Activated CD4-positive, alpha-beta T cell treated with anti-CD3 and anti-CD28 coated beads for 36 hours (primary cell): ENCODE measurements at regions of chr6 and their contacts with region 1.

Region 1: GRCh38 chr6:119349323-119350042 is at the start of gene MAN1A1:
- DNase-seq: peak; percentile 93
- ATAC-seq: peak; percentile 87
- H3K4me3 Mint-ChIP-seq: peak within 1 kb of the TSS; percentile 84
- H3K27ac Mint-ChIP-seq: peak within 1 kb of the TSS; percentile 95
- H3K4me1 Mint-ChIP-seq: peaks cover 39% of the 10 kb centered on the region
- H3K27me3 Mint-ChIP-seq: no peaks in the 10 kb centered on the region
- total RNA-seq, gene MAN1A1: 15.3 to 18.4 TPM

Region 2: DNA sequence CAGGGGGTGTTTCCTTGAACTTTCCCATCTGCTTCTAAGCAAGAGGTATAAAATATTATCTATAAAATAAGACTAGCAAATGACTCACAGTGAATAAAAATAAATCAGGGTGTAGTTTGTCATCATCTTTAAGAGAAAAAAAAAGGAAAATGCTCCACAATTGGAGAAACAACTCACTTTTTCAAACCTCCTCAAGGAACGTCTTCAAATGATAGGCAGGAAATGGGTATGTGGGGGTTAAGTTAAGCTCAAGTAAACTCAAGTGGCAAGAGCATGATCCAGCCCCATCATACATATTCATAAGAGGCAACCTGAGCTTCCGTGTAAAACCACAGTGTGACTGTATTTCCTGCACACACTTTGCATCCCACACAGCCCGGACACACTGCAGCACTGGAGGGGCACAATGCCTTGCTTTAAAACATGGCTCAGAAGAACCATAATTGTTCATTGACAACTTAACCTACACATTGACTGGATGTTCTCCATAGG is 639.6 kb before region 1 on chr6:
- CTCF ChIA-PET with region 1: no interaction called
- POLR2A ChIA-PET with region 1: interaction called, 4 read pairs
- intact Hi-C with region 1: loop called in 1 of 2 experiments (anchors 10 kb)
- DNase-seq: peak; percentile 87
- ATAC-seq: peak; percentile 81
- H3K4me3 Mint-ChIP-seq: peak overlapping the region; percentile 85
- H3K27ac Mint-ChIP-seq: peak overlapping the region; percentile 91
- H3K4me1 Mint-ChIP-seq: peaks cover 76% of the 10 kb centered on the region
- H3K27me3 Mint-ChIP-seq: no peaks in the 10 kb centered on the region

Region 3: GRCh38 chr6:118968416-118968815 is 381.1 kb before region 1 on chr6:
- CTCF ChIA-PET with region 1: no interaction called
- POLR2A ChIA-PET with region 1: no interaction called
- intact Hi-C with region 1: loop called in 1 of 2 experiments (anchors 10 kb)
- DNase-seq: no peak
- ATAC-seq: no peak
- H3K4me3 Mint-ChIP-seq: no peak overlapping the region
- H3K27ac Mint-ChIP-seq: no peak overlapping the region
- H3K4me1 Mint-ChIP-seq: no peaks in the 10 kb centered on the region
- H3K27me3 Mint-ChIP-seq: no peaks in the 10 kb centered on the region

Region 4: GRCh38 chr6:119147101-119148053 is 202.1 kb before region 1 on chr6:
- CTCF ChIA-PET with region 1: interaction called, 10 read pairs
- POLR2A ChIA-PET with region 1: interaction called, 3 read pairs
- intact Hi-C with region 1: loop called (anchors 1 to 5 kb)
- DNase-seq: peak; percentile 78
- ATAC-seq: peak; percentile 87
- H3K4me3 Mint-ChIP-seq: no peak overlapping the region
- H3K27ac Mint-ChIP-seq: peak overlapping the region; percentile 27
- H3K4me1 Mint-ChIP-seq: peaks cover 45% of the 10 kb centered on the region
- H3K27me3 Mint-ChIP-seq: peaks cover 5% of the 10 kb centered on the region

Region 5: DNA sequence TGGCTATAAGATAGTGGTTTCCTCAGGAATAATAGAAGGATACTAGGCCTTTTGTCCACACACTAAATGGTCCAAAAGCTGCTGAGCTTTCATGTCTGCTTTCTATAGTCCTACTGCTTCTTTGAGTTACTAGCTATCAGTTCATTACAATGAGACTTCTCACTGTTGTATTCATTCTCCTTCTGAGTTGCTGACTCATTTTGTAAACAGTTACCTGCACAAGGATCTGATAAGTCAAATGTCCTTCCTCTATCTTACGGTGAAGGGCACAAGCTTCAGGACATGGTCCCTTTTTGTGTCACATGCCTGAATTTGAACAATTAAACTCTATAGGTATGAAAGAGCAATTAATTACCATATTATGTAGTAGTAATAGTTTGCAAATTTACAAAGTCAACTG is 90.5 kb before region 1 on chr6:
- CTCF ChIA-PET with region 1: no interaction called
- POLR2A ChIA-PET with region 1: no interaction called
- intact Hi-C with region 1: no loop called
- DNase-seq: no peak
- ATAC-seq: no peak
- H3K4me3 Mint-ChIP-seq: no peak overlapping the region
- H3K27ac Mint-ChIP-seq: no peak overlapping the region
- H3K4me1 Mint-ChIP-seq: peaks cover 32% of the 10 kb centered on the region
- H3K27me3 Mint-ChIP-seq: no peaks in the 10 kb centered on the region

Region 6: GRCh38 chr6:119586250-119586882 is 236.9 kb after region 1 on chr6:
- CTCF ChIA-PET with region 1: no interaction called
- POLR2A ChIA-PET with region 1: no interaction called
- intact Hi-C with region 1: no loop called
- DNase-seq: no peak
- ATAC-seq: no peak
- H3K4me3 Mint-ChIP-seq: no peak overlapping the region
- H3K27ac Mint-ChIP-seq: no peak overlapping the region
- H3K4me1 Mint-ChIP-seq: no peaks in the 10 kb centered on the region
- H3K27me3 Mint-ChIP-seq: no peaks in the 10 kb centered on the region

Region 7: GRCh38 chr6:119856136-119856535 is 506.7 kb after region 1 on chr6:
- CTCF ChIA-PET with region 1: no interaction called
- POLR2A ChIA-PET with region 1: no interaction called
- intact Hi-C with region 1: loop called in 1 of 2 experiments (anchors 10 kb)
- DNase-seq: peak; percentile 41
- ATAC-seq: peak; percentile 96
- H3K4me3 Mint-ChIP-seq: no peak overlapping the region
- H3K27ac Mint-ChIP-seq: no peak overlapping the region
- H3K4me1 Mint-ChIP-seq: peaks cover 14% of the 10 kb centered on the region
- H3K27me3 Mint-ChIP-seq: no peaks in the 10 kb centered on the region